Heart left ventricle (tissue), 16 donors: ENCODE measurements at regions of chr11 and their contacts with region 1.

Region 1: DNA sequence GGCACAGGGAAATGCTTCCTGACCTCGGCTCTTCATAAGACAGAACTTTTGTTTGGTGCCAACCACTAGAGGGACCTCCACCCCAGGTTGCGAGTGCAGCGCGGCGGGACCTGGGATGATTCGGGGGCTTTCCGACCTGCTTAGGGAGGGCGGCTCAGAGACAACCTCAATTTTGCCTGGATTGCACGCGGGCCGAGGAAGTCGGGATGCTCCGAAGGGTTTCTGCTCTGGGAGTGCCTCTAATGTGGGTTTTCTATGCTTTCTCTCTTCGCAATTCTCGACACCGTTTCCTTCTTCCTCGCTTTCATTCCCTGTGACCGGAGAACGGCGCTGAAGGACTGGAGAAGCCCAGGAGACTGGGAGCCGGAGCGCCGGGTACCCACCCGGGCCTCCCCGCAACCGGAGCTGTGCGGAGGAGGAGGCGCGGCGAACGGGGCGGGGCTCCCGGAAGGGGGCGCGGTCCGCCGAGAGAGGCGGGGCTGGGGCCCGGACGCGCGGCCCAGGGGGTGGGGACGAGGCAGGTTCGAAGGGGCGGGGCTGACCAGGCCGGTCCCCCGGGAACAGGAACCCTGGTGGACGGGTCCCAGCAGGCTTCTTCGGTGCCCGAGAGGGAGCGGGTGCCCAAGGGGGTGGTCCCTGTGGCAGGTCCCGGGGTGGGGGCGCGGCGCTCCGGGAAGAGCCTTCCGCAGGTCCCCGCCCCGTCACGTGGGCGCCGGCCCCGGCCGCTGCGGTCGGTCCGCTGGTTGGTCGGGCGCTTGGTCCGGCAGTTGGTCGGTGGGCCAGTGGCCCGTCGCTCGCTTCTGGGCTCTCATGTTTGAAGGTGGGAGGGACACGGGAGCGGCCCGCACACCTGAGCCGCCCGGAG is at the start of gene PPFIBP2:
- DNase-seq: peak; percentile 85 to 91 (median 86)
- ATAC-seq: peak; percentile 67 to 94 (median 90)
- H3K4me3 ChIP-seq: peak within 1 kb of the TSS; percentile 69 to 96 (median 84)
- H3K27ac ChIP-seq: peak within 1 kb of the TSS; percentile 85 to 99 (median 96)
- H3K4me1 ChIP-seq: peaks cover 3 to 43% (median 28%) of the 10 kb centered on the region in 12 donors
- H3K27me3 ChIP-seq: no peaks in the 10 kb centered on the region
- CTCF ChIP-seq: peak; percentile 45 to 75 (median 64)
- POLR2A ChIP-seq: peak in 1 of 2 donors; percentile 56
- total RNA-seq, gene PPFIBP2: 12.5 to 31.1 (median 21.5) TPM

Region 2: DNA sequence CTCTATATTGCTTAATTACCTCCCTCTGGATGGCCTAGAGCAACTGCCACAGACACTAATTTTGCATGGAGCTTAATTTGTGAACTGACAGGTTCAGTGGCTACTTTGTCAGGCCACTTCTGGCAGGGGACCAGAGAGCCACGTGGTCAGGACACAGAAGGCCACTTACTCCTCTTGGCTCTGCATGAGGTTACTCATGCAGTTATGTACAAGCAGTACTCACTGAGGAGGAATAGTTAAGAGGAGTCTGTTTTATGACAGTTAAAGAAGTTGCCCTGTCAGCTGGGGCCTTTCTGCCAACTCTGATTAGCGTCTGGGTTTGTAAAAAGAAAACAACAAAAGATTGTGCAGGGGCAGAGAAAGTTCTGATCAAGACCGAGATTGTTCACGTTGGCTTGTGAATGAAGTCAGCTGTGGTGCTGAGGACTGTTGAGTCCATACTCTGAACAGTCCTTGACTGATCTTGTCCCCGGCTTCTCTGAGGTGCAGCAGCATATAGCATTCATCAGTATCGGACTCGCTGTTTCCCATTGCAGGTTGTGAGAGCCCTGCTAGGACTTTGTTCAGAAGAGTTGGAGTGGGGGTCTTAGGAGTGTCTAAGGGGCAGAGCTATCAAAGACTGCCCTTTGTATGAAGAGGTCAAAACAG is 41.7 kb after region 1 on chr11:
- intact Hi-C with region 1: loop called in 3 of 10 experiments (anchors 5 kb)
- DNase-seq: peak; percentile 60 to 89 (median 76)
- ATAC-seq: peak; percentile 93 to 97 (median 94)
- H3K4me3 ChIP-seq: no peak overlapping the region
- H3K27ac ChIP-seq: peak overlapping the region in 8 of 12 donors; percentile 1 to 56 (median 44)
- H3K4me1 ChIP-seq: peaks cover 0 to 15% (median 0%) of the 10 kb centered on the region in 12 donors
- H3K27me3 ChIP-seq: no peaks in the 10 kb centered on the region
- CTCF ChIP-seq: no peak
- POLR2A ChIP-seq: no peak

Region 3: DNA sequence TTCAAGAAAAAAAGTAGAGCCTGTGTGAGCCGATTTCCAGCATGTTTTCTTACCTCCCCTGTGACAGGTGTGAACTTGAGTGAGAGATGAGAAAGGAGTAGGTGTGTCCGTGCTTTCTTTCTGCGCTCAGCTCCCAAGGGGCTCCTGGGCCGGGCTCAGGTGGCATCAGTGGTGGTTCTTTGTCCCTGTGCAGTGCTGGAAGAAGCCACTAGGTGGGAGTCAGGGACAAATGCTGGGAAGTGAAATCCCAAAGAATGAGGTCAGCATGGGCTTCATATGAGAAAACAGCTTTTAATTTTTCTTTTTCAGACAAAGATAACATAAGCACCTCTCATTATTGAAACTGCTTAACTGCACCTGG is 58.2 kb after region 1 on chr11:
- intact Hi-C with region 1: loop called in 6 of 10 experiments (anchors 2 to 10 kb)
- DNase-seq: peak in 4 of 5 donors; percentile 51 to 69 (median 60)
- ATAC-seq: peak in 3 of 4 donors; percentile 64 to 78 (median 66)
- H3K4me3 ChIP-seq: no peak overlapping the region
- H3K27ac ChIP-seq: peak overlapping the region in 2 of 12 donors; percentile 3 to 17
- H3K4me1 ChIP-seq: peaks cover 6 to 34% (median 23%) of the 10 kb centered on the region in 12 donors
- H3K27me3 ChIP-seq: peaks cover 0 to 9% (median 0%) of the 10 kb centered on the region in 9 donors
- CTCF ChIP-seq: peak; percentile 87 to 96 (median 94)
- POLR2A ChIP-seq: no peak

Region 4: DNA sequence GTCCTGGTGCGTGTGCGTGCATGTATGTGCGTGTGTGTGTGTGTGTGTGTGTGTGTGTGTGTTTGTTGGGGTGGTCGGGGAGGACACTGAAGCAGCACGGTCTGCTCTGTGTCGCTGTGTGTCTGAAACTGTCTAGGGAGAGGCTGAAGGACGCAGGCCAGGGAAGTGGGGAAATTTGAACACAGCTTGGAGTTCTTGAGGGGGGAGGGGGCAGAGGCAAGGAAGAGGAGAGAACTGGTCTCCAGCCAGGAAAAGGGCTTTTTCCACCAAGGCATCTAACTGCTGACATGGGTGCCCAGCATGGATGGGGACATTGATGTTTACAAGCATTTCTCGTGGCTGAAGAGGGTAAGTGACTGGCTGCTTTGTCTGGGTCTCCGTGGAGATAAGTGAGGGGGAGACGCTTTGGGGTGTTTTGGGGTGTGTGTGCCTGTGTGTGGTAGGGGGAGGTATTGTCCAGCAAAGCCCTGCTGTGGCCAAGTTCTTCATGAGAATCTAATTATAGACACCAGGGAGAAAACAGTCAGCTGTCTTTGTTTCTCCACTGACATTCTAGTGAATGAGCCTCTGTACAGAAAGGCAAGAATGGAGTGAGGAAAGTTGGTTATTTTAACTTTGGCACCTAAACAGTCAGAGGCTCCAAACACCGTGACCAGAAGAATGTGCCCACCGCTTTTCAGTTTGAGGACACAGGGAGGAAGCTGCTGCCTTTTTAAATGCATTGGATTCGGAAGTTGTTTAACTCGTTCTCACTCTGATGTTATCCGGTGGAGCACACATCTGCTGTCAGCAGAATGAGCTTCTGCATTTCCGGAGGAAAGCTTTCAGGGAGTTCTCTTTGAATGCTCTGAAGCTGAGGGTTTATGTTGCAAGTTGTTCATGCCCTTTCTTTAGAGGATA is 64.1 kb after region 1 on chr11:
- intact Hi-C with region 1: loop called in 5 of 10 experiments (anchors 2 to 10 kb)
- DNase-seq: peak in 4 of 5 donors; percentile 44 to 64 (median 57)
- ATAC-seq: peak; percentile 53 to 75 (median 58)
- H3K4me3 ChIP-seq: peak overlapping the region; percentile 3 to 66 (median 47)
- H3K27ac ChIP-seq: peak overlapping the region; percentile 68 to 91 (median 80)
- H3K4me1 ChIP-seq: peaks cover 7 to 77% (median 45%) of the 10 kb centered on the region in 12 donors
- H3K27me3 ChIP-seq: peaks cover 0 to 16% (median 0%) of the 10 kb centered on the region in 9 donors
- CTCF ChIP-seq: no peak
- POLR2A ChIP-seq: peak in 1 of 2 donors; percentile 11

Region 5: GRCh38 chr11:7657306-7658025 is 144.0 kb after region 1 on chr11:
- intact Hi-C with region 1: loop called in 2 of 10 experiments (anchors 2 kb)
- DNase-seq: peak in 3 of 5 donors; percentile 43 to 75 (median 62)
- ATAC-seq: peak; percentile 75 to 98 (median 93)
- H3K4me3 ChIP-seq: no peak overlapping the region
- H3K27ac ChIP-seq: peak overlapping the region in 2 of 12 donors; percentile 31 to 55
- H3K4me1 ChIP-seq: peaks cover 0 to 19% (median 8%) of the 10 kb centered on the region in 12 donors
- H3K27me3 ChIP-seq: no peaks in the 10 kb centered on the region
- CTCF ChIP-seq: peak; percentile 31 to 66 (median 57)
- POLR2A ChIP-seq: no peak

Region 6: GRCh38 chr11:7665473-7666291 is 152.2 kb after region 1 on chr11:
- intact Hi-C with region 1: loop called in 2 of 10 experiments (anchors 5 kb)
- DNase-seq: peak; percentile 67 to 89 (median 74)
- ATAC-seq: peak; percentile 85 to 97 (median 94)
- H3K4me3 ChIP-seq: no peak overlapping the region
- H3K27ac ChIP-seq: no peak overlapping the region
- H3K4me1 ChIP-seq: peaks cover 0 to 6% (median 0%) of the 10 kb centered on the region in 12 donors
- H3K27me3 ChIP-seq: no peaks in the 10 kb centered on the region
- CTCF ChIP-seq: peak; percentile 61 to 90 (median 82)
- POLR2A ChIP-seq: no peak

Region 7: DNA sequence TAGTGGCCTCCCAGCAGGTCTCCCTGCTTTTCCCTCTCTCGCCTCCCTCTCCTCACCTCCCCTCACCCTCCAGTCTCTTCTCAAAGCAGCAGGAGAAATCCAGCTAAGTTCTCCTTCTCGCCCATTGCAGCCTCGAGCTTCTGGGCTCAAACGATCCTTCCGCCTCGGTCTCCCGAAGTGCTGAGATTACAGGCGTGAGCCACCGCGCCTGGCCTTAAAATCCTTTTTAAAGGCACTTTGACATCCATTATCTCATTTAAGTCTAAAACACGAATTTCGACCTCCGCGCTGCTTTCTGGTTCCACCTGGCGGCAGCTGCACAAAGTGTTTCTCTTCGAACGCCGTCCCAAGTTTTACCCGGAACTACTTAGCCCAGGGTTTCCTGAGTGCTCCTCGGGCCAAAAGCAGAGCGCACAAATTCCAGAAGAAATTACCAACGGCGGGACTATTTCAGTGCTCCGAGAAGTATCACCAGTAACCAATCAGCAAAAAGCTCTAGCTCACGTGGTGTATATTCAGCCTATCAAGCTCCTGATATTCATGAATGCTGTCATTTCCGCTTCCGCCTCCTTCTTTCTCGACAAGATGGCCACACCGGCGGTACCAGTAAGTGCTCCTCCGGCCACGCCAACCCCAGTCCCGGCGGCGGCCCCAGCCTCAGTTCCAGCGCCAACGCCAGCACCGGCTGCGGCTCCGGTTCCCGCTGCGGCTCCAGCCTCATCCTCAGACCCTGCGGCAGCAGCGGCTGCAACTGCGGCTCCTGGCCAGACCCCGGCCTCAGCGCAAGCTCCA is 473.5 kb after region 1 on chr11 and contains the start of gene EIF3F:
- intact Hi-C with region 1: loop called in 1 of 10 experiments (anchors 5 kb)
- DNase-seq: peak; percentile 87 to 96 (median 91)
- ATAC-seq: peak; percentile 99 to 100 (median 100)
- H3K4me3 ChIP-seq: peak within 1 kb of the TSS; percentile 64 to 93 (median 74)
- H3K27ac ChIP-seq: peak within 1 kb of the TSS; percentile 11 to 82 (median 67)
- H3K4me1 ChIP-seq: peaks cover 9 to 36% (median 25%) of the 10 kb centered on the region in 12 donors
- H3K27me3 ChIP-seq: no peaks in the 10 kb centered on the region
- CTCF ChIP-seq: peak; percentile 75 to 96 (median 84)
- POLR2A ChIP-seq: peak in 1 of 2 donors; percentile 52
- total RNA-seq, gene EIF3F: 134 to 181 (median 147) TPM